ENCODE measurements at regions of chr2 and their contacts with region 1.

Region 1: DNA sequence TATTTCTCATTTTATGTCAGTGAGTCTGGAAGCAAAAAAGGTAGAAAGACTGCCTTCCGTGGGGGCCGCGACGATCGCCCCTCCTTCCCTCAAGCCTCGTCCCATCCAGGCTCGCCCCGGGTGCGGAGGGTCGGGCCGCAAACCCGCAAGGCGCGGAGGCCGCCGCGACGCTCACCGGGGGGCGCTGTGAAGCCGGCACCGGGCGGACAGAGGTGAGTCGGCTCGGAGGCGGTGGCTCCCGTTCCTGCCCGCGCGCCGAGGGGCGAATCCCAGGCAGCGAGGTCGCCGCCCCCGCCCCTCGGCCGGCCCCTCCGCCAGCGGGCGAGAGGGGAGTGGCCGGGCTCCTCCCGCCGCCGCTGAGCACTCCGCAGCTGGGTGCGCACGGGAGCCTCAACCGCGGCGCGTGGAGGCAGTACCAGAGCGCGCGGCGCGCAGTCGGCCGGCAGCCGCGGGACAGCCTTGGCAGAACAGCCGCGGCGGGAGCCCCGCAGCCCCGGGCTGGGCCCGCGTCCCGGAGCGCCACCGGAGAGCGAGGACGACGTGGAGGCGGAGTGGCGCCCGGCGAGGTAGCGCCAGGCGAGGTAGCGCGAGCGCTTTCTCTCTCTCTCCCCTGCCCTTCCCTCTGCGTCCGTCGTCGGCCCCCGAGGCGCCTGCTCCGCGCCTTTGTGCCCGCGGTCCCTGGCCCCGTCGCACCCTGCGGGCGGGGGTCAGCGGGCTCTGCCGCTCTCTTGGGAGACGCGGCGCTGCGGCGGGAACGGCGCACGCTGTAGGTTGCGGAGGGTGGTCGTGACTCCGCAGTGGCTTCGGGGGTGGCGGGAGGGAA is at the start of gene MYO1B:
- DNase-seq: peak; percentile 76 to 88 (median 80)
- ATAC-seq: peak; percentile 36 to 86 (median 72)
- H3K4me3 ChIP-seq: peak within 1 kb of the TSS; percentile 50 to 87 (median 74)
- H3K27ac ChIP-seq: peak within 1 kb of the TSS; percentile 66 to 91 (median 82)
- H3K4me1 ChIP-seq: peaks cover 0 to 39% (median 19%) of the 10 kb centered on the region in 12 donors
- H3K27me3 ChIP-seq: peaks cover 0 to 15% (median 0%) of the 10 kb centered on the region in 9 donors
- CTCF ChIP-seq: peak; percentile 37 to 79 (median 60)
- POLR2A ChIP-seq: peak in 1 of 2 donors; percentile 66
- total RNA-seq, gene MYO1B: 10.8 to 47.3 (median 16.2) TPM

Region 2: DNA sequence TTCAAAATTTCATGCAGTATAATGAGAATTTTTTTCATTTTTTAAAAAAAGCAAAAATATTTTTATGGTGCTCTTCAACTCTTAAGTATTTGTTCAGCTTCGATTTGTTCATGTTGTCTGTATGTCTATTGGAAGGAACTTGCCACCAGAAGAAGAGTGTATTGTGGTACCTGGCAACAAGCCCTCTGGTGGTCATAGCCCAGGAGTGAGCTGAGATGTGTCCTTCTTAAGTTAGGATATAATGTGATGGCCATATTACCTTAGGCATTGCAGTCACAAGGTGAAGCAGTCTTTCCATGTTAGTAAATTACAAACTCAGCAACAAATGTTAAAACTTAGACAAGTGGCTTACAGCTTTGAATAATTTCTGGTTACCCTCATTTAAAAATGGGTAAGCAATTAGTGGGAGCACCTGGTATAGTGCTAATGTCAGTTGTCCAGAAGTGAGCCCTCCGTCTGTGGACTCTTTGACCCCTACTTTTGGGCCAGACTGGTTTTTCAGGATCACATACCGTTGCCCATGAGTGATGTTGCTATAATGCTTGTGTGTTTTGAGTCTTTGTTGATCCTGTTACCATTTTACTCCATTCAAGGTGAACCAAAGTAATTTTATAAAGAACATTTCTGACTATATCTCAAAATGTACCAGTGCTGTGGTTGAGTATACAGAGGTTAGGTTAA is 57.3 kb after region 1 on chr2:
- intact Hi-C with region 1: loop called in 1 of 10 experiments (anchors 10 kb)
- DNase-seq: no peak
- ATAC-seq: no peak
- H3K4me3 ChIP-seq: no peak overlapping the region
- H3K27ac ChIP-seq: peak overlapping the region in 3 of 12 donors; percentile 19 to 78 (median 35)
- H3K4me1 ChIP-seq: peaks cover 0 to 74% (median 16%) of the 10 kb centered on the region in 12 donors
- H3K27me3 ChIP-seq: no peaks in the 10 kb centered on the region
- CTCF ChIP-seq: no peak
- POLR2A ChIP-seq: no peak

Region 3: DNA sequence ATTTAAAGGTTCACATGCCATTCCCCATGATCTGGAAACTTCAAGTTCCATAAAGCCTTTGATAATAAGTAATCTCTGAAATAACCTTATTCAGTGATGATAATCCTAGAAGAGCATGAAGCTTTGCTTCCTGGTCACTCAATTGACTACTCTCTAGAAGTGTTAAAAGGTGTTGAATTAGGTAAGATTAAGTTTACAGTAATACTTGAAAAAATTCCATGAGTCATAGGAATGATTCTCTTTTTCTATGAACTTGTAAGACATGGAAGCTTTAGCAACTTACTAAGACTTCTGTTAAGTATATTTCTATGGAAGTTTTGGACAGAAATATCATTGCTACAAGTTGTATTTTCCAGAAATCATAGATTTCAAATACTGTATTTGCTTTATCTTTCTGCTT is 100.5 kb after region 1 on chr2:
- intact Hi-C with region 1: loop called in 1 of 10 experiments (anchors 10 kb)
- DNase-seq: no peak
- ATAC-seq: no peak
- H3K4me3 ChIP-seq: no peak overlapping the region
- H3K27ac ChIP-seq: no peak overlapping the region
- H3K4me1 ChIP-seq: peaks cover 0 to 23% (median 2%) of the 10 kb centered on the region in 12 donors
- H3K27me3 ChIP-seq: no peaks in the 10 kb centered on the region
- CTCF ChIP-seq: no peak
- POLR2A ChIP-seq: no peak

Region 4: DNA sequence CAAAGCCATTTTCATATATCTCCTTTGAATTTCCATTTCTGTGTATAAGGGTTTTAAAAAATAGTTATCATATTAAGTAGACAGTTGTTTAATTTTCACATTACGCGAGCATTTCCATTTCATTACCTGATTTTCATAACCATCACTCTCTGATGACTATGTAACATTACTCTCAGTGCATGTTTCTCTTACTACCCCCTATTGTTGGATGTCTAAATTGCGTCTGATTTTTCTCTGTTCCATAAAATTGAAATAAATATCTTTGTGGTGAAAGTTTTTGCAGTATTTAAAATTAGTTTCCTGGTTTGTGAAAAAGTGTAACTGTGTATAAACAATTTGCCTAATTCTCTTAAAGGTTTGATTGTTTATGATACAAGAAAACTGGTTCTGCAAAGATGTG is 123.8 kb after region 1 on chr2:
- intact Hi-C with region 1: loop called in 4 of 10 experiments (anchors 5 to 10 kb)
- DNase-seq: no peak
- ATAC-seq: no peak
- H3K4me3 ChIP-seq: no peak overlapping the region
- H3K27ac ChIP-seq: no peak overlapping the region
- H3K4me1 ChIP-seq: peaks cover 0 to 14% (median 0%) of the 10 kb centered on the region in 12 donors
- H3K27me3 ChIP-seq: no peaks in the 10 kb centered on the region
- CTCF ChIP-seq: peak in 8 of 12 donors; percentile 9 to 46 (median 28)
- POLR2A ChIP-seq: no peak

Region 5: DNA sequence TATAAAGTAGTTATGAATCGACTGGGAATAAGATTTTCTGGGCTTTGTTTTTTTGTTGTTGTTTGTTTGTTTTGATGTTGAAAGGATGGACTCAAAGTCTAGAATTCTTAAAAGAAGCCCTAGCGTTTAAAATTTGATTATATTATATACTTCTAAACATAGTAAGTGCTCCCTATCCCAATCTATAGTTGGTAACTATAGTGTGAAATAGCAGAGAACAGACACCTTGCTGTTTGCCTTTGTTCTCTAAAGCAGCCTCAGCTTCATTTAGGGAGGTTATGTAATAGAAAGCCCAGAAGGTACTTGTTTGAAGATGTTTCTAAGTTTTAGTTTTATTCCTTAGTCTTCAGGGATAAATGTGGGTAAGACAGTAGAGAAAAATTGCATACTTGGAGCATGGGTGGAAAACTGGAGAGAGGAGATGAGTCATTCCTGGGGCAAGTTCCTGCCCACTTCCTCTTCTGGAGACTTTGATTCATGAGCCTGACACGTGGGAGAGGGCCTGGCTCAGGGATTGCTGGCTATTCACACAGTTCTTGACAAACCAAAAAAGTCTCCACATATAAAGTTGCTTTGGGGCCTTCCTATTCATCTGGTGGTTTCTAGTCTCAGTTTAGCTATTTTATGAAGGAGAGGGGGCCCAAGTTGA is 131.8 kb after region 1 on chr2:
- intact Hi-C with region 1: loop called in 6 of 10 experiments (anchors 5 to 10 kb)
- DNase-seq: peak in 4 of 5 donors; percentile 61 to 79 (median 71)
- ATAC-seq: peak; percentile 92 to 99 (median 96)
- H3K4me3 ChIP-seq: no peak overlapping the region
- H3K27ac ChIP-seq: peak overlapping the region in 10 of 12 donors; percentile 11 to 65 (median 46)
- H3K4me1 ChIP-seq: peaks cover 0 to 19% (median 14%) of the 10 kb centered on the region in 12 donors
- H3K27me3 ChIP-seq: no peaks in the 10 kb centered on the region
- CTCF ChIP-seq: no peak
- POLR2A ChIP-seq: no peak

Region 6: DNA sequence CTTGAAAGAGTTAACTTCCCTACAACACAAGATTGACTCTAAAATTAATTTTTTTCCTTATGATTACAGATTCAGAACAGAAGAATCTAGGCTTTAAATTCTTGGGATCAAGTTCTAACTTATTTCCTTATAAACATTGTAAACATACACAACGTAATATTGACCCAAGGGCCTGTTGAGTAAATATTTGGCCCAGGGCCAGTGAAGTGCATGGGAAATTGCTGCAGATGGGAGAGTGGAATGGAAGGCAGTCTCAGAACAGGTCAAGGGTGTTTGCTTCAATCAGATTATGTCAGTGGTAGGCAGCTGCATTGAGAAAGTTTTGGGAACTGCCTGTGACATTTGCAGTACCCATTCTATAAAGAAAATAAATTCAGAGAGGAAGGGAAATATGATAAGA is 137.5 kb after region 1 on chr2:
- intact Hi-C with region 1: loop called in 6 of 10 experiments (anchors 5 to 10 kb)
- DNase-seq: peak in 3 of 5 donors; percentile 31 to 47 (median 36)
- ATAC-seq: peak in 1 of 4 donors; percentile 59
- H3K4me3 ChIP-seq: no peak overlapping the region
- H3K27ac ChIP-seq: peak overlapping the region in 2 of 12 donors; percentile 42 to 65
- H3K4me1 ChIP-seq: peaks cover 0 to 30% (median 10%) of the 10 kb centered on the region in 12 donors
- H3K27me3 ChIP-seq: no peaks in the 10 kb centered on the region
- CTCF ChIP-seq: no peak
- POLR2A ChIP-seq: no peak

Region 7: DNA sequence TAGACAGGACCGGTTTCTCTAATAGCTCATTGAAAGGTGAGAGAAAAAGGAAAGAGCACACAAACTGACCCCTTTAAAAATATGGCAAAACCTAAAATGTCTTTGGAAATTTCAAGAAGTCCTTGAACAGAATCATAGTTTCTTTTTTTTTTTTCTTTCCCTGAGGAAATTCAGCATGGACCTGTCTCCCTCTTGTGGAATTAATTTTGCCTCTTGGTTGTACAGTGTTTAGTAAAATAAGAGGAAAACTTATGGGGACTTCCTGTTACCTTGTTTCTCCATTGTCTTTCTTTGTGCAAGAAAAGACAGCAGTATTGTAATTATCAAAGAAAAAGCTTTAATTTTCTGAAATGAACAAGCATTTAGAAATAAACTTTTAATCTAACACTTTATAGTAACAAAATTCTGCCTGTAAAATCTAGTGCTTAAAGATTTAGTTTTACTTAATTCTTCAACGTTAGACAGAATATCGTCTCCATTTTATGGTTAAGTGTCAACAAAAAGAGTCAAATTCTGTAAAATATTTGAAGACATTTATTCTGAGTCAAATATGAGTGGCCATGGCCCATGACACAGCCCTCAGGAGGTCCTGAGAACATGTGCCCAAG is 256.4 kb after region 1 on chr2:
- intact Hi-C with region 1: loop called in 2 of 10 experiments (anchors 5 kb)
- DNase-seq: no peak
- ATAC-seq: peak in 3 of 4 donors; percentile 38 to 75 (median 68)
- H3K4me3 ChIP-seq: no peak overlapping the region
- H3K27ac ChIP-seq: peak overlapping the region in 7 of 12 donors; percentile 19 to 74 (median 47)
- H3K4me1 ChIP-seq: peaks cover 0 to 24% (median 13%) of the 10 kb centered on the region in 12 donors
- H3K27me3 ChIP-seq: no peaks in the 10 kb centered on the region
- CTCF ChIP-seq: peak; percentile 52 to 83 (median 68)
- POLR2A ChIP-seq: no peak

Measured in heart left ventricle (tissue), 16 donors.